GM12878 (cell line): ENCODE measurements at regions of chr3 and their contacts with region 1.

Region 1: GRCh38 chr3:127775398-127776109 is 46.8 kb downstream of the MGLL start:
- DNase-seq: no peak
- ATAC-seq: peak; percentile 79
- H3K4me3 ChIP-seq: peak overlapping the region; percentile 19; the same call in 1 of the 2 replicates
- H3K27ac ChIP-seq: peak overlapping the region; percentile 94
- H3K4me1 ChIP-seq: peaks cover 67% of the 10 kb centered on the region
- H3K27me3 ChIP-seq: no peaks in the 10 kb centered on the region
- CTCF ChIP-seq: no peak
- EP300 ChIP-seq: peak in 1 of 2 experiments; percentile 41; a peak in 2 of 4 replicates
- POLR2A ChIP-seq: no peak
- RAD21 ChIP-seq: no peak

Region 2: GRCh38 chr3:127625821-127626220 is 149.7 kb before region 1 on chr3:
- CTCF ChIA-PET with region 1: no interaction called
- POLR2A ChIA-PET with region 1: no interaction called
- RAD21 ChIA-PET with region 1: no interaction called
- SMC1A ChIA-PET with region 1: no interaction called
- in situ Hi-C with region 1: no loop called
- intact Hi-C with region 1: no loop called
- DNase-seq: no peak
- ATAC-seq: no peak
- H3K4me3 ChIP-seq: no peak overlapping the region
- H3K27ac ChIP-seq: no peak overlapping the region
- H3K4me1 ChIP-seq: peaks cover 8% of the 10 kb centered on the region
- H3K27me3 ChIP-seq: peaks cover 10 to 13% of the 10 kb centered on the region in 2 experiments; a peak in 3 of 4 replicates
- CTCF ChIP-seq: no peak
- EP300 ChIP-seq: no peak
- POLR2A ChIP-seq: no peak
- RAD21 ChIP-seq: no peak

Region 3: DNA sequence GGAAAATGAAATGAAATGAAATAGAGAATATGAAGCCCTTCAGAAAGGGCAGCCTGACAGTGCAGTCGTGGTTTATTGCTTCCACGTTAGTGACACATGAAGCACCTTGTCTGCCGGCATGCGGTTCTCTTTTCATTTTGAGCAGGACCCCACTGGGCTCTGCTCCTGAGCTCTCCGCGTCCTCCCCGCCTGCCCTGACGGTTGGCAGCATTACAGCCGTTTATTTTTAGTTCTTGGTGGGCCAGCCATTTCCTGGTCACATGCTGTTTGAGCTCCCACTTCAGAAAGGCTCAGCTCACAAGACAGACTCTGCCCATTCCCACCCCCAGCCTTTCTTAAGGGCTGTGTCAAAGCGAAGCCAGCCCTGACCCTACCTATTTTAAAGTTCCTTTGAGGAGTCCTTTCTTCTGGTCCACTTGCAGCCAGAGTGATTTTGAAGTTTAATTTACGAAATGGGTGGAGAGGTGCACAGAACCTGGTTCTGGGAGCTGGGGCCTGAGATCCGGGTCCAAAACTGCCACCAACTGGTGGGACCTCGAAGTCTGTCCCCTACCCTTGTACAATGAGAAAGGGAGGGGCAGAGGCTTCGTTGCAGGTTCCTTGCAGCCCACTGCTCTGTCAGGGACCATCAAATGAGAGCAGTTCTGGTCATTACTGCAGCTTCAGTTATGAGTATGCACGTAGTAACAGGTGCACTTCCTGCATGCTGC is 13.3 kb before region 1 on chr3:
- CTCF ChIA-PET with region 1: interaction called, 8 read pairs
- POLR2A ChIA-PET with region 1: interaction called, 14 read pairs
- RAD21 ChIA-PET with region 1: interaction called, 9 read pairs
- SMC1A ChIA-PET with region 1: interaction called, 20 read pairs
- in situ Hi-C with region 1: no loop called
- intact Hi-C with region 1: no loop called
- DNase-seq: peak; percentile 56
- ATAC-seq: peak; percentile 75
- H3K4me3 ChIP-seq: peak overlapping the region; percentile 62
- H3K27ac ChIP-seq: peak overlapping the region; percentile 96
- H3K4me1 ChIP-seq: peaks cover 64% of the 10 kb centered on the region
- H3K27me3 ChIP-seq: no peaks in the 10 kb centered on the region
- CTCF ChIP-seq: no peak
- EP300 ChIP-seq: peak; percentile 20 to 26; a peak in 1 of 4 replicates
- POLR2A ChIP-seq: peak; percentile 69
- RAD21 ChIP-seq: peak; percentile 13; the same call in 1 of the 2 replicates

Region 4: DNA sequence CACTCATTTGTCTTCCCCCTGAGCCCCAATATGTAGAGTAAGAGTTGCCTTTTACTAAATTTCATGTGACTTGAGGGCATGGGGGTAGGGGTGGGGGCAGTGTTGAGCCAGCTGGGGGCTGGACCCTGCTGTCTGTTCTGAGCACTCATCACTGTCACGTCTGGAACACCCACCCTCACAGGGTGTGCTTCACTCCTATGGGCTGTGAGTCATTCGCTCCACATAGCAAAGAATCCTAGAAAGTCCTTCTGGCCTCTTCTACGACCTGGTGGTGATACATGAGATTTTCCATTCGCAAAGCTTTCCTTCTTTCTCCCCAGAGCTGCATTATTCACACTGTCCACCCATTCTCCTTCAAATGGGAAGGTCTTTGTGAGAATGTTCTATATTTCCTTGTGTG is 90.4 kb after region 1 on chr3:
- CTCF ChIA-PET with region 1: no interaction called
- POLR2A ChIA-PET with region 1: no interaction called
- RAD21 ChIA-PET with region 1: no interaction called
- SMC1A ChIA-PET with region 1: no interaction called
- in situ Hi-C with region 1: no loop called
- intact Hi-C with region 1: no loop called
- DNase-seq: no peak
- ATAC-seq: no peak
- H3K4me3 ChIP-seq: no peak overlapping the region
- H3K27ac ChIP-seq: no peak overlapping the region
- H3K4me1 ChIP-seq: no peaks in the 10 kb centered on the region; the same call in 1 of the 2 replicates
- H3K27me3 ChIP-seq: no peaks in the 10 kb centered on the region
- CTCF ChIP-seq: no peak
- EP300 ChIP-seq: no peak
- POLR2A ChIP-seq: no peak
- RAD21 ChIP-seq: no peak